Activated CD8-positive, alpha-beta T cell treated with anti-CD3 and anti-CD28 coated beads, Interleukin-2, amount 10 ng/mL, durations not matched to agents 7 days and 5 days (primary cell): ENCODE measurements at regions of chr2 and their contacts with region 1.

Region 1: DNA sequence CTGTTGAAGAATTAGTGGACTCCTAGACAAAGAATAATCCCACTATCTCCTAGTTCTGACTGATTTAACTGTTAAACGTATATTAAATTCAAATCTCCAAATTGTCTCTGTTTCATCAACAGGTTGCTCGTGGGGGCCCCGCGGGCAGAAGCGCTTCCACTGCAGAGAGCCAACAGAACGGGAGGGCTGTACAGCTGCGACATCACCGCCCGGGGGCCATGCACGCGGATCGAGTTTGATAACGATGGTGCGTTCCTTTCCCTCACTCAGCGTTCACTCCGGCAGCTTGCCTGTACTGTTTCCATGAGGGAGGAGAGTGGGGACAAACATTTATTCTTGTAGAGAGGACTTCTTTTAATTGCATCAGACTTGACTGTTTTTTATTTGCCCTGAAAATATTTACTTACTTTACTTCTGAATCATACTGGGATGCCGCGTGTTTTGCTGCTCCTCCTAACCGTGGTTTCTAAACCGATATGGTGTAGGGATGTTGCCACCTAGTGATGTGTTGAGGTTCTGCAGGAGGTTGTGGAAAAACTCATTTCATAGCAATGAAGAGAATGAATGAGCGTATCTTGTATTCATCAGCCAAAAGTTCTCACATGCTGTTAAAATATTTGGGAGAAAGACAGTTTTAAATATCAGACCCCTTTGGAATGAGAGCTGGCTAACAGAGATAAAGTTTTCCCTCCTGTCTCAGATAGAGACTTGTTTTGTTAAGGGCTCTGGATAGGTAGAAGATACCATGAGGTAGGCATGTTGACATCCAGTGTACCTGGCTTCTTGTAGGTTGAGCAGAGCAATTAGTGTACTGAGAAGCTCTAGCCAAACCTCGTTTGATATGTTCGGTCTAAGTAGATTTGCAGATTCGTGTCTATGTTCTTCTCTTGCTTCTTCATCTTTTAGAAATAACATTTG is 38.3 kb downstream of the ITGA6 start:
- DNase-seq: peak; percentile 84
- ATAC-seq: no peak
- H3K4me3 Mint-ChIP-seq: no peak overlapping the region
- H3K27ac Mint-ChIP-seq: peak overlapping the region; percentile 60
- H3K4me1 Mint-ChIP-seq: peaks cover 61% of the 10 kb centered on the region
- H3K27me3 Mint-ChIP-seq: no peaks in the 10 kb centered on the region

Region 2: DNA sequence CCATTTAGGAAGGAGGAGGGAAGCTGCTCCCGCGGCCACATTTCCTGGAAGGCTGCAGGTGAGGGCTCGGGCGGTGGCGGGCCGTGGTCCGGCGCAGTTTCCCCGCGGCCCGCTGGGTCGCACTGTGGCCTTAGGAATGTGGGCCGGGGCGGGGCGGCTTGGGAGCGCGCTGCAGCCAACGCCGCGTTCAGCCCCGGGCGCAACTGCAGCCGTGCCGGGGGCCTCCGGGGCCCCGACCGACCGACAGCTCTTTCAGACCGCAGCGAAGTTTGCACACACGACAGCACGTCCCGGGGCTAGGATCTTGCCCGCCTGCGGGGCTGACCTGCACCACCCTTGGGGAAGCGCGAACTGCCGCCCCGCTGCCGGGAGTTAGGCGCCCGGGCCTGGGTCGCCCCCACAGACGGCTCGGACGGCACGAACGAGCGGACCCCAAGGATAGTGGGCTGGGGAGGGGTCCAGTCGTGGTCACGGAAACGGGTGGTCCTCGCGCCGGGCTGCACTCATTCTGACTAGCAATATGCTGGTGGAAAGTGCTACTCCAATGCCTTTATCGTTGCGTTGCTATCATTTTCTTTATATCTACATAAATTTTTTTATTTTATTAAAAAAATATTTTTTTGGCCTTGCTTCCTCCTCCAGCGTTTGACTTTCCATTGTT is 293.0 kb before region 1 on chr2:
- CTCF ChIA-PET with region 1: interaction called, 67 read pairs
- POLR2A ChIA-PET with region 1: no interaction called
- DNase-seq: peak; percentile 69
- ATAC-seq: peak; percentile 98
- H3K4me3 Mint-ChIP-seq: peak overlapping the region; percentile 52
- H3K27ac Mint-ChIP-seq: no peak overlapping the region
- H3K4me1 Mint-ChIP-seq: peaks cover 9% of the 10 kb centered on the region
- H3K27me3 Mint-ChIP-seq: peaks cover 18% of the 10 kb centered on the region

Region 3: GRCh38 chr2:172216477-172216876 is 249.2 kb before region 1 on chr2:
- CTCF ChIA-PET with region 1: interaction called, 10 read pairs
- POLR2A ChIA-PET with region 1: no interaction called
- DNase-seq: no peak
- ATAC-seq: no peak
- H3K4me3 Mint-ChIP-seq: no peak overlapping the region
- H3K27ac Mint-ChIP-seq: no peak overlapping the region
- H3K4me1 Mint-ChIP-seq: peaks cover 25% of the 10 kb centered on the region
- H3K27me3 Mint-ChIP-seq: peaks cover 4% of the 10 kb centered on the region

Region 4: DNA sequence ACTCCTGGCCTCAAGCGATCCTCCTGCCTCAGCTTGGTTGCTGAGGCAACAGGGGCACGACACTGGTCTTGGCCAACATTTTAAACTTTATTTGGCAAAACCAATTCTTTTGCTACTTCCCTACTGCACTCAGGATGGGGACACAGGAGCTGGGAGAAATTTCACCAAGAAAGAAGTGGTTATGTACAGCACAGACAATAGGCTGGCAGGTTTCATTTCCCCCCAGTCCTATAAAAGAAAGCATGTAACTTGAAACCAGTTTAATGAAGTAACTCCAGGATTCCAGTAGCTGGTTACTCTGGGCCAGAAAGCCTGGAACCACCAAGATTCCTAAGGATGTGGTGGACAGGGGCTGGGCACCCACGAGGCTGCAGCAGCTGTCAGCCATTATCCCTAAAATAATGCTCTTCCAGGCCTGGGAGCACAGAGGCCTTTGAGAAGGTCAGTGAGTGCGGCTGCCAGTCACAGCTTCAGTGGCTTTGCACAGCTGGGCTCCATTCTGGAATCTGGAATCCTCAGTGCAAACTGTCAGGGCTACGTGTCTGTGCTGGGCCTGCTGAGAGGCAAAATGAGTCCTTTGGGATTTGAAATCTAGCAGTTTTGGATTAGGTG is 180.6 kb before region 1 on chr2:
- CTCF ChIA-PET with region 1: interaction called, 10 read pairs
- POLR2A ChIA-PET with region 1: no interaction called
- DNase-seq: no peak
- ATAC-seq: no peak
- H3K4me3 Mint-ChIP-seq: no peak overlapping the region
- H3K27ac Mint-ChIP-seq: no peak overlapping the region
- H3K4me1 Mint-ChIP-seq: peaks cover 8% of the 10 kb centered on the region
- H3K27me3 Mint-ChIP-seq: peaks cover 2% of the 10 kb centered on the region

Region 5: GRCh38 chr2:172446474-172447063 is 19.1 kb before region 1 on chr2:
- CTCF ChIA-PET with region 1: interaction called, 457 read pairs
- POLR2A ChIA-PET with region 1: interaction called, 3 read pairs
- DNase-seq: no peak
- ATAC-seq: peak; percentile 58
- H3K4me3 Mint-ChIP-seq: no peak overlapping the region
- H3K27ac Mint-ChIP-seq: no peak overlapping the region
- H3K4me1 Mint-ChIP-seq: peaks cover 46% of the 10 kb centered on the region
- H3K27me3 Mint-ChIP-seq: no peaks in the 10 kb centered on the region

Region 6: DNA sequence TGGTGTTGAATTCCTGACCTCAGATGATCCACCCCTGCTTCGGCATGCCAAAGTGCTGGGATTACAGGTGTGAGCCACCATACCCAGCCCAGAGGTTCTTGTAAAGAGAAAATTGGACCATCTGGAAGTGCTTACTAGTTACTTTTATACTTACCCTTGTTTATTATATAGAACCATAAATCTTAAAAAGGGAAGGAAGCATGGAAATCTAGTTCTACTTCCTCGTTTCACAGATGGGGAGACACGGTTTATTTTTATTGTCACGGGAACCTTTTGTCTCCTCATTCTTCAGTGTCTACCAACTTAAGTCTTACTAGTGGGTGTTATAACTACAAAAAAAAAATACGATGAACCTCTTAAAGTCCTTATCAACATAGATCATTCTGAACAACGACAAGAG is 44.4 kb after region 1 on chr2:
- CTCF ChIA-PET with region 1: no interaction called
- POLR2A ChIA-PET with region 1: no interaction called
- DNase-seq: no peak
- ATAC-seq: no peak
- H3K4me3 Mint-ChIP-seq: peak overlapping the region; percentile 0
- H3K27ac Mint-ChIP-seq: peak overlapping the region; percentile 9
- H3K4me1 Mint-ChIP-seq: peaks cover 26% of the 10 kb centered on the region
- H3K27me3 Mint-ChIP-seq: no peaks in the 10 kb centered on the region

Region 7: GRCh38 chr2:172710584-172711024 is 244.9 kb after region 1 on chr2:
- CTCF ChIA-PET with region 1: interaction called, 27 read pairs
- POLR2A ChIA-PET with region 1: no interaction called
- DNase-seq: peak; percentile 59
- ATAC-seq: no peak
- H3K4me3 Mint-ChIP-seq: no peak overlapping the region
- H3K27ac Mint-ChIP-seq: no peak overlapping the region
- H3K4me1 Mint-ChIP-seq: no peaks in the 10 kb centered on the region
- H3K27me3 Mint-ChIP-seq: peaks cover 9% of the 10 kb centered on the region

Region 8: DNA sequence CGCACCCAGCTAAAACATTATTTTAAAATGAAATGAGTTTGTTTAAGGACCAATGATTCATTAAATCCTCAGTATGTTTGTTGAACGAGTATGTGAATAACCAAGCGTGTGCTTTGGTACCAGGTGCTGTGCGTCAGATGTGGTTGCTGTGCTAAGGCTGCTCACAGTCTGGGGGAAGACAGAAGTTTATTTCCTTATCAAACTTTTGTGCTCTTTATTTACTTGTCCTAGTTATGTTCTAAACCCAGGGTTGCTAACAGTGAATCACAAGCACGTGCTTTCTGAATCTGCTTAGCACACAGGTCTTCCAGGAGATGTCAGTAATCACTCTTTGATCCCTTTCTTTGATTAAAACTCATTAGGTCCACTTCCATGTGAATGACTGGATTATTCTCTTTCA is 307.0 kb after region 1 on chr2:
- CTCF ChIA-PET with region 1: no interaction called
- POLR2A ChIA-PET with region 1: no interaction called
- DNase-seq: no peak
- ATAC-seq: no peak
- H3K4me3 Mint-ChIP-seq: no peak overlapping the region
- H3K27ac Mint-ChIP-seq: no peak overlapping the region
- H3K4me1 Mint-ChIP-seq: no peaks in the 10 kb centered on the region
- H3K27me3 Mint-ChIP-seq: peaks cover 2% of the 10 kb centered on the region